B cell (primary cell): ENCODE measurements at regions of chr10 and their contacts with region 1.

Region 1: DNA sequence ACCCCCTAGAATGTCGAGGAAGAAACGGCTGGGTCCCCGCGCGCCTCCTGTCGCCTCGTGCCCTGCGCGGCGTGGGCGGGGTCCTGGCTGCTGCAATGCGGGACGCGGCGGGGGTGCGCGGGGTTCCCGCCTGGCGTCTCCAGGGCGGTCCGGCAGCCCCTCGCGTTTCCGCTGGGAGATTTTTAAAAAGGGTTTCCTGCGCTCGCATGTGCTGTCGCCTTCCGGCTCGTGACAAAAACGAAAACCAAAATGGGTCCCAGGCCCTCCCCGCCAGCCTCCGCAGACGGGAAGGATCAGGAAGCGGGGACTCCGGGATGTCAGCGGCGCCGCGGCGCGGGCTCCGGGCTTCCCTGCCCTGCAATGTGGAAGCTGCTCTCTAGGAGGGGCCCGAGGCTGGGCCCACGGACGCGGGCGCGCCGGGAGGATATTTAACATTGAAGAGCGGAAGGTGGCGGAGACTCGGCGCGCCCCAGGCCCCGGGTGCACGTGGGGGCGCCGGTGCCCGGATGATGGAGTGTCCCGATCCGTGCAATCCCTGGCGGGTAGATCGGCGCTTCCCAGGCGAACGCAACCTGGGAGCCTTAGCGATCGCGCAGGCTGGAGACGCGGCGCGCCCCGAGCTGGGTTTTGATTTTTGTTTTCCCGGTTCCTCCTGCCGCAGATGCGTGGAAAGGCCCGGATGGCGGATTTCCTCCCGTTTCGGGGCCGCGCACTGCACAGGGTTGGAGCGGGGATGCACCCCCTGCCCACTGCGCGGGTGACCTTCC is 1.0 kb downstream of the PFKP start:
- DNase-seq: peak; percentile 70
- ATAC-seq: peak; percentile 28
- H3K4me3 ChIP-seq: peak overlapping the region; percentile 37 to 95 (median 88)
- H3K4me3 Mint-ChIP-seq: peak overlapping the region; percentile 94
- H3K27ac ChIP-seq: peak overlapping the region; percentile 41 to 68
- H3K27ac Mint-ChIP-seq: peak overlapping the region; percentile 87
- H3K4me1 ChIP-seq: peaks cover 8 to 15% of the 10 kb centered on the region in 2 donors
- H3K4me1 Mint-ChIP-seq: peaks cover 41% of the 10 kb centered on the region
- H3K27me3 ChIP-seq: peaks cover 0 to 8% (median 0%) of the 10 kb centered on the region in 4 experiments
- H3K27me3 Mint-ChIP-seq: peaks cover 6% of the 10 kb centered on the region
- CTCF ChIP-seq: no peak

Region 2: GRCh38 chr10:1635340-1635739 is 1433.0 kb before region 1 on chr10:
- CTCF ChIA-PET with region 1: no interaction called
- POLR2A ChIA-PET with region 1: interaction called, 11 read pairs
- intact Hi-C with region 1: no loop called
- DNase-seq: no peak
- ATAC-seq: no peak
- H3K4me3 ChIP-seq: no peak overlapping the region
- H3K4me3 Mint-ChIP-seq: no peak overlapping the region
- H3K27ac ChIP-seq: no peak overlapping the region
- H3K27ac Mint-ChIP-seq: no peak overlapping the region
- H3K4me1 ChIP-seq: no peaks in the 10 kb centered on the region
- H3K4me1 Mint-ChIP-seq: no peaks in the 10 kb centered on the region
- H3K27me3 ChIP-seq: peaks cover 0 to 5% (median 0%) of the 10 kb centered on the region in 4 experiments
- H3K27me3 Mint-ChIP-seq: peaks cover 31% of the 10 kb centered on the region
- CTCF ChIP-seq: no peak

Region 3: GRCh38 chr10:3162533-3162932 is 94.1 kb after region 1 on chr10:
- CTCF ChIA-PET with region 1: no interaction called
- POLR2A ChIA-PET with region 1: no interaction called
- intact Hi-C with region 1: no loop called
- DNase-seq: no peak
- ATAC-seq: no peak
- H3K4me3 ChIP-seq: no peak overlapping the region
- H3K4me3 Mint-ChIP-seq: no peak overlapping the region
- H3K27ac ChIP-seq: no peak overlapping the region
- H3K27ac Mint-ChIP-seq: no peak overlapping the region
- H3K4me1 ChIP-seq: no peaks in the 10 kb centered on the region
- H3K4me1 Mint-ChIP-seq: no peaks in the 10 kb centered on the region
- H3K27me3 ChIP-seq: no peaks in the 10 kb centered on the region
- H3K27me3 Mint-ChIP-seq: no peaks in the 10 kb centered on the region
- CTCF ChIP-seq: no peak

Region 4: GRCh38 chr10:3172446-3173170 is 104.2 kb after region 1 on chr10 and contains the start of gene PITRM1:
- CTCF ChIA-PET with region 1: no interaction called
- POLR2A ChIA-PET with region 1: no interaction called
- intact Hi-C with region 1: loop called (anchors 1 kb)
- DNase-seq: peak; percentile 100
- ATAC-seq: peak; percentile 90
- H3K4me3 ChIP-seq: peak within 1 kb of the TSS; percentile 64 to 90 (median 77)
- H3K4me3 Mint-ChIP-seq: peak within 1 kb of the TSS; percentile 88
- H3K27ac ChIP-seq: peak within 1 kb of the TSS; percentile 68 to 92
- H3K27ac Mint-ChIP-seq: peak within 1 kb of the TSS; percentile 84
- H3K4me1 ChIP-seq: peaks cover 7 to 17% of the 10 kb centered on the region in 2 donors
- H3K4me1 Mint-ChIP-seq: peaks cover 16% of the 10 kb centered on the region
- H3K27me3 ChIP-seq: no peaks in the 10 kb centered on the region
- H3K27me3 Mint-ChIP-seq: no peaks in the 10 kb centered on the region
- CTCF ChIP-seq: no peak
- total RNA-seq, gene PITRM1: 65.3 and 71.1 TPM in 2 replicates

Region 5: DNA sequence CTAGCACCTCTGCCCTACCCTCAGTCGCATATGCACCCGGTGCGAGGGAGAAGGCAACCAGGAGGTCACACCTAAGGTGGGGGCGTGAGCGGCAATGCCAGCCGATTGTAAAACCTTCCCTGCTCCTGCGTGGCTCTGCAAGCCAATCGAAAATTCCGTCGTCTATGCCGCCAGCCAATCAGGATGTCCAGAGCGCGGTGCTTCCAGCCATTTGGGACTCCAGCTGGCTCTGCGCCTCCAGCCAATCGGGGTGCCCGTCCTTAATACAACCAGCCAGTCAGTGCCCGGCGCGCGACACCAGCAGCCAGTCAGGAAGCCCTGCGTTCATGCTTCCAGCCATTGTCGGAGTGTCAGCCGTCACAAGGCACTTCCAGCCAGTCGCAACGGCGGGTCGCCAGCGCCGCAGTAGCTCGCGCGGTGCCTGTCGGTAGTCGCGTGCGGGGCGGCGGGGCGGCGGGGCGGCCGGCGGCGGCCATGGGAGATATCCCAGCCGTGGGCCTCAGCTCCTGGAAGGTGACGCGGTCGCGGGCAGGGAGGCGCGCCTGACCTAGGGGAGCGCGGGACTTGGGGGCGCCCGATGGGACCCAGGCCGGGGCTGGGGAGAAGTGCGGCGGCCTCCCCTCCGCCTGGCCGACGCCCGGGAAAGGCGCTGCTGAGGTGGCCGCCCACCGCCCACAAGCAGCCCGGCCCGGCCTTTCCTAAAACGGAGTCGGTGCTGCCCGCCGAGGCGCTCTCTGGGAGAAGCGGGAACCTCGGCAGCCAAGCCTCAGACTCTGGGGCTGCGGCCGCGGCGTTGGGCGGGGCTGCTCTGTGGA is 1757.7 kb after region 1 on chr10 and contains the start of gene AKR1E2:
- CTCF ChIA-PET with region 1: no interaction called
- POLR2A ChIA-PET with region 1: no interaction called
- intact Hi-C with region 1: no loop called
- DNase-seq: peak; percentile 62
- ATAC-seq: peak; percentile 69
- H3K4me3 ChIP-seq: peak within 1 kb of the TSS in 4 of 5 experiments; percentile 11 to 43 (median 38)
- H3K4me3 Mint-ChIP-seq: peak within 1 kb of the TSS; percentile 65
- H3K27ac ChIP-seq: no peak within 1 kb of the TSS
- H3K27ac Mint-ChIP-seq: no peak within 1 kb of the TSS
- H3K4me1 ChIP-seq: peaks cover 0 to 3% of the 10 kb centered on the region in 2 donors
- H3K4me1 Mint-ChIP-seq: peaks cover 5% of the 10 kb centered on the region
- H3K27me3 ChIP-seq: peaks cover 0 to 35% (median 7%) of the 10 kb centered on the region in 4 experiments
- H3K27me3 Mint-ChIP-seq: peaks cover 66% of the 10 kb centered on the region
- CTCF ChIP-seq: no peak
- total RNA-seq, gene AKR1E2: 0.42 TPM in 1 of 2 replicates, not detected in the other